Caco-2 (cell line): ENCODE measurements at regions of chr3 and their contacts with region 1.

Region 1: DNA sequence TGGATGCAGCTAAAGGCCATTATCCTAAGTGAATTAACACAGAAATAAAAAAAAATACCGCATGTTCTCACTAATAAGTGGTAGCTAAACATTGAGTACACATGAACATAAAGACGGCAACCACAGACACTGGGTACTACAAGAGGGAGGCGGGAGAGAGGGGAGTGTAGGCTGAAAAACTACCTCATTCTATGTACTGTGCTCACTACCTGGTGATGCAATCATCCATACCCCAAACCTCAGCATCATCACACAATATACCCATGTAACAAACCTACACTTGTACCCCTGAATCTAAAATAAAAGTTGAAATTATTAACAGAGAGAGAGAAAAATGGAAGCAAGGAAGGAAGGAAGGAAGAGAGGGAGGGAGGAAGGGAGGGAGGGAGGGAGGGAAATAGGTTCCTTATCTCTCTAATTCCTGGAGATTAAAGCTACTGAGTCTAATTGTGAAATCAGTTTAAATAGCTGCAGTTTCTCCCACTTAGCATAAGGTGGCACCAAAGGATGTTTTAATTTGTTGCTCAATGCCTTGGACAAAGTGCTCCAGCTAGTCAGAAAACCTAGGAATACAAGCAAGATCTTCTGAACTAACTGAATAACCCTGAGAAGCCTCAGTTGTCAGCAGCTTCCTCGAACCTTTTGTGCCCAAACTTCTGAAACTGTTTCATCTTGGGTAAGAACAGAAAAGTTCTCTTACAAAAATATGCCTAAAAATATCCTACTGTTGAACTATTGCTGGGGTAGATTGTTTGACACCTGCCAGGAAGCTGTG is 79.4 kb upstream of the ATP11B start:
- DNase-seq: peak in 1 of 2 experiments; percentile 65
- H3K4me3 ChIP-seq: no peak overlapping the region
- H3K4me3 Mint-ChIP-seq: no peak overlapping the region
- H3K27ac Mint-ChIP-seq: no peak overlapping the region
- H3K4me1 ChIP-seq: peaks cover 38% of the 10 kb centered on the region
- H3K4me1 Mint-ChIP-seq: peaks cover 28% of the 10 kb centered on the region
- H3K27me3 ChIP-seq: no peaks in the 10 kb centered on the region
- H3K27me3 Mint-ChIP-seq: no peaks in the 10 kb centered on the region
- CTCF ChIP-seq: peak; percentile 63 to 71

Region 2: GRCh38 chr3:182516597-182517336 is 197.2 kb before region 1 on chr3:
- CTCF ChIA-PET with region 1: no interaction called
- POLR2A ChIA-PET with region 1: no interaction called
- intact Hi-C with region 1: no loop called
- DNase-seq: no peak
- H3K4me3 ChIP-seq: no peak overlapping the region
- H3K4me3 Mint-ChIP-seq: no peak overlapping the region
- H3K27ac Mint-ChIP-seq: no peak overlapping the region
- H3K4me1 ChIP-seq: no peaks in the 10 kb centered on the region
- H3K4me1 Mint-ChIP-seq: no peaks in the 10 kb centered on the region
- H3K27me3 ChIP-seq: no peaks in the 10 kb centered on the region
- H3K27me3 Mint-ChIP-seq: no peaks in the 10 kb centered on the region
- CTCF ChIP-seq: no peak

Region 3: DNA sequence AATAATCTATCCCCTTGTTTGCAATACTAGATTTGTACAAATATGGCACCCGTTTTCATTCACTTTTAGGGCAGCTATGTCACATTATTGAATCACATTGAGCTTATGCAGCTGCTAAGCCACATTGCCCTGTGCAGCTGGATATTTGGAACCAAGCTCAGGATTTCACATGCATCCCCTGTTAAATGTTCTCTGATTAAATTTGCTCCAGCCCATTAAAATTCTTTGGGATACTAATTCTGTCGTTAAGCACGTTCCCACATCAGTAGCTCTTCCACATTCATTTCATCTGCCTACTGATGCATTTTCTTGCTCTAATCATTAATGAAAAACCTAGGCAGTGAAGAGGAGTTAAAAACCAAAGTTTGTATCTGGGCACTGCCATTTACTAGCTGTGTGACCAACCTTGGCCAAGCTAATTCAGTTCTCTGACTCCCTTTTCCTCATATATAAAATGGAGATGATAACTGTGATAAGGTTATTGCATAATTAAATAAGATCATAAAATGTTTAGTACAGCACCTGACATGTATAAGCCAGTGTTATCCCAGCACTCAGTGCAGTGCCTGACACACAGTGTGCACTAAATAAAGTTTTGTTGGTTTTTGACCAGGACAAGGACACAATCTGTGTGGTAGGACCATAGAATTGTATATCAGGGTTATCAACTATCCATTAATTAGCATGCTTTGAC is 142.9 kb before region 1 on chr3:
- CTCF ChIA-PET with region 1: no interaction called
- POLR2A ChIA-PET with region 1: no interaction called
- intact Hi-C with region 1: no loop called
- DNase-seq: no peak
- H3K4me3 ChIP-seq: no peak overlapping the region
- H3K4me3 Mint-ChIP-seq: no peak overlapping the region
- H3K27ac Mint-ChIP-seq: no peak overlapping the region
- H3K4me1 ChIP-seq: no peaks in the 10 kb centered on the region
- H3K4me1 Mint-ChIP-seq: no peaks in the 10 kb centered on the region
- H3K27me3 ChIP-seq: no peaks in the 10 kb centered on the region
- H3K27me3 Mint-ChIP-seq: peaks cover 4% of the 10 kb centered on the region
- CTCF ChIP-seq: no peak

Region 4: DNA sequence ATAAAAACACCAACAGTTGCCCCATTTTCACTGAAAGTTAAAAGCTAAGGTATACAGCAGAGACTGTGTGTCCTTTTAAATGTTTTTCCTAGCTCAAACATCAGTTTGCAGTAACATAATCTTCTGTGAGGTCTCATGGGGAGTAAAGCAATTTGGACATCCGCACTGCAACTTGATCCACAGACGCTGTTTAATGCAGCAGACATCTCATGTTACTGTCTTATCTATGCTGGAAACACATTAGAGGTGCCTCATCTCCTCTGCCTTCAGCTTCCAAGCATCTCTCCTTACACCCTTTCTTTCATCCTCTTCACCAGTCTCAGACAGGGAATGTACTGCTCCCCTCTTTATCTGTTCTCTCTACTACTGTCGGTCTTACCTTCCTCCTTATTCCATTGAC is 25.7 kb after region 1 on chr3:
- CTCF ChIA-PET with region 1: no interaction called
- POLR2A ChIA-PET with region 1: no interaction called
- intact Hi-C with region 1: loop called (anchors 2 kb)
- DNase-seq: no peak
- H3K4me3 ChIP-seq: no peak overlapping the region
- H3K4me3 Mint-ChIP-seq: no peak overlapping the region
- H3K27ac Mint-ChIP-seq: peak overlapping the region; percentile 62
- H3K4me1 ChIP-seq: peaks cover 25% of the 10 kb centered on the region
- H3K4me1 Mint-ChIP-seq: peaks cover 20% of the 10 kb centered on the region
- H3K27me3 ChIP-seq: no peaks in the 10 kb centered on the region
- H3K27me3 Mint-ChIP-seq: no peaks in the 10 kb centered on the region
- CTCF ChIP-seq: no peak

Region 5: GRCh38 chr3:182755308-182755707 is 41.4 kb after region 1 on chr3:
- CTCF ChIA-PET with region 1: no interaction called
- POLR2A ChIA-PET with region 1: no interaction called
- intact Hi-C with region 1: no loop called
- DNase-seq: no peak
- H3K4me3 ChIP-seq: no peak overlapping the region
- H3K4me3 Mint-ChIP-seq: no peak overlapping the region
- H3K27ac Mint-ChIP-seq: no peak overlapping the region
- H3K4me1 ChIP-seq: peaks cover 28% of the 10 kb centered on the region
- H3K4me1 Mint-ChIP-seq: peaks cover 2% of the 10 kb centered on the region
- H3K27me3 ChIP-seq: no peaks in the 10 kb centered on the region
- H3K27me3 Mint-ChIP-seq: no peaks in the 10 kb centered on the region
- CTCF ChIP-seq: no peak

Region 6: GRCh38 chr3:182792901-182793662 is 79.2 kb after region 1 on chr3 and contains the start of gene ATP11B:
- CTCF ChIA-PET with region 1: interaction called, 8 read pairs
- POLR2A ChIA-PET with region 1: interaction called, 6 read pairs
- intact Hi-C with region 1: loop called (anchors 1 kb)
- DNase-seq: peak; percentile 74 to 80
- H3K4me3 ChIP-seq: peak within 1 kb of the TSS; percentile 91
- H3K4me3 Mint-ChIP-seq: peak within 1 kb of the TSS; percentile 95
- H3K27ac Mint-ChIP-seq: peak within 1 kb of the TSS; percentile 93
- H3K4me1 ChIP-seq: 0 out of 2 replicates have a peak, but pooled peaks cover 13% of the 10 kb centered on the region
- H3K4me1 Mint-ChIP-seq: peaks cover 9% of the 10 kb centered on the region
- H3K27me3 ChIP-seq: no peaks in the 10 kb centered on the region
- H3K27me3 Mint-ChIP-seq: no peaks in the 10 kb centered on the region
- CTCF ChIP-seq: no peak
- total RNA-seq, gene ATP11B: 54.5 and 58.1 TPM in 2 replicates

Region 7: GRCh38 chr3:182909318-182910040 is 195.5 kb after region 1 on chr3:
- CTCF ChIA-PET with region 1: no interaction called
- POLR2A ChIA-PET with region 1: no interaction called
- intact Hi-C with region 1: loop called (anchors 1 kb)
- DNase-seq: no peak
- H3K4me3 ChIP-seq: no peak overlapping the region
- H3K4me3 Mint-ChIP-seq: no peak overlapping the region
- H3K27ac Mint-ChIP-seq: no peak overlapping the region
- H3K4me1 ChIP-seq: no peaks in the 10 kb centered on the region
- H3K4me1 Mint-ChIP-seq: no peaks in the 10 kb centered on the region
- H3K27me3 ChIP-seq: no peaks in the 10 kb centered on the region
- H3K27me3 Mint-ChIP-seq: no peaks in the 10 kb centered on the region
- CTCF ChIP-seq: peak; percentile 45 to 57

Region 8: GRCh38 chr3:183385698-183386613 is 672.0 kb after region 1 on chr3:
- CTCF ChIA-PET with region 1: no interaction called
- POLR2A ChIA-PET with region 1: no interaction called
- intact Hi-C with region 1: loop called (anchors 10 kb)
- DNase-seq: peak; percentile 48 to 69
- H3K4me3 ChIP-seq: no peak overlapping the region
- H3K4me3 Mint-ChIP-seq: no peak overlapping the region
- H3K27ac Mint-ChIP-seq: no peak overlapping the region
- H3K4me1 ChIP-seq: 0 out of 2 replicates have a peak, but pooled peaks cover 3% of the 10 kb centered on the region
- H3K4me1 Mint-ChIP-seq: no peaks in the 10 kb centered on the region
- H3K27me3 ChIP-seq: no peaks in the 10 kb centered on the region
- H3K27me3 Mint-ChIP-seq: no peaks in the 10 kb centered on the region
- CTCF ChIP-seq: peak; percentile 67 to 69